HEK293 (cell line): ENCODE measurements at regions of chr14 and their contacts with region 1.

Region 1: GRCh38 chr14:94548999-94549985 is 11.9 kb upstream of the SERPINA4 start:
- H3K4me3 ChIP-seq: no peak overlapping the region
- H3K27ac ChIP-seq: no peak overlapping the region
- H3K4me1 ChIP-seq: no peaks in the 10 kb centered on the region
- CTCF ChIP-seq: peak; percentile 46

Region 2: GRCh38 chr14:94439453-94440057 is 109.7 kb before region 1 on chr14:
- CTCF ChIA-PET with region 1: interaction called, 30 read pairs
- POLR2A ChIA-PET with region 1: no interaction called
- H3K4me3 ChIP-seq: no peak overlapping the region
- H3K27ac ChIP-seq: no peak overlapping the region
- H3K4me1 ChIP-seq: no peaks in the 10 kb centered on the region
- CTCF ChIP-seq: no peak

Region 3: GRCh38 chr14:94485944-94486841 is 63.1 kb before region 1 on chr14:
- CTCF ChIA-PET with region 1: interaction called, 13 read pairs
- POLR2A ChIA-PET with region 1: no interaction called
- H3K4me3 ChIP-seq: no peak overlapping the region
- H3K27ac ChIP-seq: no peak overlapping the region
- H3K4me1 ChIP-seq: no peaks in the 10 kb centered on the region
- CTCF ChIP-seq: peak; percentile 84

Region 4: GRCh38 chr14:94532447-94532846 is 16.8 kb before region 1 on chr14:
- CTCF ChIA-PET with region 1: interaction called, 17 read pairs
- POLR2A ChIA-PET with region 1: no interaction called
- H3K4me3 ChIP-seq: no peak overlapping the region
- H3K27ac ChIP-seq: no peak overlapping the region
- H3K4me1 ChIP-seq: no peaks in the 10 kb centered on the region
- CTCF ChIP-seq: no peak

Region 5: GRCh38 chr14:94559638-94560290 is 10.5 kb after region 1 on chr14:
- CTCF ChIA-PET with region 1: interaction called, 13 read pairs
- POLR2A ChIA-PET with region 1: no interaction called
- H3K4me3 ChIP-seq: no peak overlapping the region
- H3K27ac ChIP-seq: no peak overlapping the region
- H3K4me1 ChIP-seq: no peaks in the 10 kb centered on the region
- CTCF ChIP-seq: no peak